ENCODE measurements at regions of chr18 and their contacts with region 1.

Region 1: DNA sequence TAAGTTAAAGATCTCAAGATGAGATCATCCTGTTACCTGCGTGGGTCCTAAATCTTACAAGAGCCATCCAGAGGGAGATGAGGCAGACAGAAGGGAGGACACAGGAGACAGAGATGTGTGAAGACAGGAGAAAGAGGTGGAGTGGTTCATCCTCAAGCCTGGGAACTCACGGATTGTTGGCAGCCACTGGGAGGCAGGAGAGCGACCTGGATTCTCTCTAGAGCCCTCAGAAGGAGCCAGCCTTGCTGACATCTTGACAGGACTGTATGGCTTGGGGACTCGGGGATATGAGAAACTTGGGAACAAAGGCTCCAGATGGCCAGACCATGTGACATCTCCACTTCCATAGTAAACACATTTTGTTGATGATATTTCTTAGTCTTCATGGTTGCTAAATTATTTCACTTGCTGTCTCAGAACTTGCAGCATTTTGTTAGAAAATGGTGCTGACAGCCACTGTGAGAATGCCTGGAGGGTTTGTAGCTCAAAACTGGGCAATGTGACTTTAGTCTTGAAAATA is 57.8 kb upstream of the MC2R start:
- DNase-seq: no peak
- ATAC-seq: no peak
- H3K4me3 ChIP-seq: no peak overlapping the region
- H3K27ac ChIP-seq: no peak overlapping the region
- H3K4me1 ChIP-seq: no peaks in the 10 kb centered on the region
- H3K27me3 ChIP-seq: no peaks in the 10 kb centered on the region
- CTCF ChIP-seq: no peak

Region 2: GRCh38 chr18:13915995-13916431 is 57.1 kb before region 1 on chr18:
- intact Hi-C with region 1: loop called in 1 of 3 experiments (anchors 10 kb)
- DNase-seq: no peak
- ATAC-seq: peak in 1 of 4 donors; percentile 56
- H3K4me3 ChIP-seq: no peak overlapping the region
- H3K27ac ChIP-seq: no peak overlapping the region
- H3K4me1 ChIP-seq: no peaks in the 10 kb centered on the region
- H3K27me3 ChIP-seq: no peaks in the 10 kb centered on the region
- CTCF ChIP-seq: no peak